ENCODE measurements at regions of chr11 and their contacts with region 1.

Region 1: DNA sequence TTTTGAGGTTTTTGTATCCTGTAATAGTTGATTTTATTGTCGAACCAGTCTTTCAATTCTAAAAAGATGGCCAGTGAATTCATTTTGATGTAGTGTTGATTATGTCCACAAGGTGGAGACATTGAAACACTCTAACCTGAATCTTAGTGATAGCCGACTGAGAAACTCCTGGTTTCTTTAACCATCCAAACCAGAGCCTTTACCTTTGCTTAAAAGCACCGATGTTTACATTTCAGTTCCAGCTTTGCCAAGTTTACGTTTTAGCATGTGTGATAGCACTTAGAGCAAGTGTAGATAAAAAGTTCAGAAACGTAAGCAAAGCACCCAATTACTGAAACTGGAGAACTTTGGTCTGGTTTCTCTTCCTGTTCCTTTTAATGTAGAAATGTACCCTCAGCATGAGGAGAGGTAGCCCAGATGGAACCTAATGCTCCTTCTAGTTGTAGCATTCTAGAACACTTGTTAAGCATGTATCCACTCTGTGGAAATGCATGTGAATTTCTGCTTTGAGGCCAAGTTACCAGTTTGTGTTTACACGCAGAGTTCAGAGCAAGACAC is 208.6 kb downstream of the DBX1 start:
- DNase-seq: no peak
- ATAC-seq: peak; percentile 51 to 65
- H3K4me3 ChIP-seq: no peak overlapping the region
- H3K27ac ChIP-seq: no peak overlapping the region
- H3K4me1 ChIP-seq: peaks cover 12 to 28% of the 10 kb centered on the region in 2 donors
- H3K27me3 ChIP-seq: no peaks in the 10 kb centered on the region
- CTCF ChIP-seq: peak; percentile 51 to 74 (median 65)
- POLR2A ChIP-seq: no peak

Region 2: GRCh38 chr11:20000351-20001134 is 48.9 kb after region 1 on chr11:
- in situ Hi-C with region 1: no loop called
- intact Hi-C with region 1: no loop called
- DNase-seq: no peak
- ATAC-seq: no peak
- H3K4me3 ChIP-seq: no peak overlapping the region
- H3K27ac ChIP-seq: no peak overlapping the region
- H3K4me1 ChIP-seq: peaks cover 0 to 10% of the 10 kb centered on the region in 2 donors
- H3K27me3 ChIP-seq: no peaks in the 10 kb centered on the region
- CTCF ChIP-seq: no peak
- POLR2A ChIP-seq: no peak

Region 3: DNA sequence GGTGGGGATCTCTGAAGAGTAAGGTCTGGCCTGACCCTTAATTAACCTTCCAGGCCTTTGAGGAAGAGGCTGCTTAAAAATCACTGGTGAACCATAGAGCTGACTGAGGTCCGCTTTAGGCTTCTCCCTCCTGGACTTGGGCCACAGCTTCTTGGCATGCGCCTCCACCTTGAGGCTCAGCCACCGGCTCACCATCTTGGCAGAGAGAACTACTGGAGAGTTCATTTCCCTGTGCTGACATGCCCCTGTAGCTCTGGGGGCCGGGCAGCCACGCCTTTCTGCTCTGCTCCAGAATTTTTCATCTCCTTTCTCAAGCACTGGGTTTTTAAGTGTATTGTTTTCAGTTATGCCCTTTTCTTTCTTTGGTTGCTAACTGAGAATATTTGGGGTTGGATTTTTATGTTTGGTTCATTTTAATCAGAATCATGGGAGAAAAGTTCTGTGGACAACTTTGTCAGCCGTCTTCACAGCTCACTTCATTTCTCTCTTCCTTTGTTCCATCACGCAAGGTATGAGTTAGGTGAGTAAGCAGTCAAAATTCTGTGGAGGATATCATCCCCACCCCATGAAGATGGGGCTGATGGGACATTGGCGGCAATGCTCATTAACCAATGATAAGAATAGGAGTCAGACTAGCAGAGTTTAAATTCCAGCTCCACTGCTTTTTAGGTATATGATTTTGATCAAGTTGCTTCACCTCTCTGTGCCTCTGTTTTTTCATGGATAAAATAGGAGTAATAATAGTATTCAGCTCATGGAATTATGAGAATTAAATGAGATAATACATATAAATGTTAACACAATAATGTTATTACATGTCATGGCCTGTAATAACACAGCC is 104.7 kb after region 1 on chr11:
- in situ Hi-C with region 1: no loop called
- intact Hi-C with region 1: loop called (anchors 5 kb)
- DNase-seq: peak; percentile 58
- ATAC-seq: peak; percentile 54 to 74
- H3K4me3 ChIP-seq: no peak overlapping the region
- H3K27ac ChIP-seq: peak overlapping the region; percentile 67 to 87 (median 79)
- H3K4me1 ChIP-seq: peaks cover 34 to 45% of the 10 kb centered on the region in 2 donors
- H3K27me3 ChIP-seq: no peaks in the 10 kb centered on the region
- CTCF ChIP-seq: no peak
- POLR2A ChIP-seq: no peak

Region 4: GRCh38 chr11:20102397-20102796 is 150.8 kb after region 1 on chr11:
- in situ Hi-C with region 1: loop called in 1 of 4 experiments (anchors 10 kb)
- intact Hi-C with region 1: no loop called
- DNase-seq: no peak
- ATAC-seq: no peak
- H3K4me3 ChIP-seq: no peak overlapping the region
- H3K27ac ChIP-seq: no peak overlapping the region
- H3K4me1 ChIP-seq: no peaks in the 10 kb centered on the region
- H3K27me3 ChIP-seq: no peaks in the 10 kb centered on the region
- CTCF ChIP-seq: no peak
- POLR2A ChIP-seq: no peak

Region 5: DNA sequence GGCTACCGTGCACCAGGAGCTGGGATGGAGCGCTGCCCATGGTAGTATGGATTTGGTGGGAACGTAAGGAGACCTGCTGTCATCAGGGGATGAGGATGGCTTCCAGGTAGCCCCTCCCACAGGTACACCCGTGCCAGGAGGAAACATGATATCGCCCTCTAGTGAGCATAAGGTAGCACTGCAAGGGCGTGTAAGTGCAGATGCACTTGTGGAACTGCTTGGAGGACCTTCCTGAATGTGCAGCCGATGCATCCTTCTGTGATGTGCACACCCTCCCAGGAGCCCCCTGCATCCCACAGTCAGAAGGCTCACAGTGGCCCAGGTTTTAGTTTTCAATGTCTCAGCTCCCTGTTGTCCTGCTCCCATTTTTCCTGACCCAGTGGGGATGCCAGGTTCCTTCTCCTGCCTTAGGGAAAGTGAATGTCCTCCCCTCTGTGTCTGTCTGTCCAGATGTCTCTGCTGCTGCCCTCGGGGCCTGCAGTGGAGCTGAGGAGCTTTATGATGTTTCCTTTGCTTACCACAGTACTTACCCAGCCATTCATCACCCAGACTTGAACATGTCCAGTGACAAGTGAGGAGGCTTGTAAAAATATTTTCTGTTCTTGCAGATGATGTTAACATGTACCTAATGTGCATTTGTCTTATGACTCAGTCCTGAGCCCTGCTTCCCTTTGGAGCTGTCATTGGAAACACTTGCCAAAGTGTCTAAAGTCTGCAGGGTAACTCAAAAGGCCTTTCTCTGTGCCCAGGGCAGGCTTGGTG is 159.5 kb after region 1 on chr11:
- in situ Hi-C with region 1: loop called in 2 of 4 experiments (anchors 5 to 10 kb)
- intact Hi-C with region 1: loop called (anchors 2 kb)
- DNase-seq: no peak
- ATAC-seq: peak in 1 of 2 donors; percentile 42
- H3K4me3 ChIP-seq: no peak overlapping the region
- H3K27ac ChIP-seq: peak overlapping the region in 1 of 4 donors; percentile 67
- H3K4me1 ChIP-seq: peaks cover 8 to 9% of the 10 kb centered on the region in 2 donors
- H3K27me3 ChIP-seq: no peaks in the 10 kb centered on the region
- CTCF ChIP-seq: peak; percentile 49 to 79 (median 75)
- POLR2A ChIP-seq: no peak

Region 6: DNA sequence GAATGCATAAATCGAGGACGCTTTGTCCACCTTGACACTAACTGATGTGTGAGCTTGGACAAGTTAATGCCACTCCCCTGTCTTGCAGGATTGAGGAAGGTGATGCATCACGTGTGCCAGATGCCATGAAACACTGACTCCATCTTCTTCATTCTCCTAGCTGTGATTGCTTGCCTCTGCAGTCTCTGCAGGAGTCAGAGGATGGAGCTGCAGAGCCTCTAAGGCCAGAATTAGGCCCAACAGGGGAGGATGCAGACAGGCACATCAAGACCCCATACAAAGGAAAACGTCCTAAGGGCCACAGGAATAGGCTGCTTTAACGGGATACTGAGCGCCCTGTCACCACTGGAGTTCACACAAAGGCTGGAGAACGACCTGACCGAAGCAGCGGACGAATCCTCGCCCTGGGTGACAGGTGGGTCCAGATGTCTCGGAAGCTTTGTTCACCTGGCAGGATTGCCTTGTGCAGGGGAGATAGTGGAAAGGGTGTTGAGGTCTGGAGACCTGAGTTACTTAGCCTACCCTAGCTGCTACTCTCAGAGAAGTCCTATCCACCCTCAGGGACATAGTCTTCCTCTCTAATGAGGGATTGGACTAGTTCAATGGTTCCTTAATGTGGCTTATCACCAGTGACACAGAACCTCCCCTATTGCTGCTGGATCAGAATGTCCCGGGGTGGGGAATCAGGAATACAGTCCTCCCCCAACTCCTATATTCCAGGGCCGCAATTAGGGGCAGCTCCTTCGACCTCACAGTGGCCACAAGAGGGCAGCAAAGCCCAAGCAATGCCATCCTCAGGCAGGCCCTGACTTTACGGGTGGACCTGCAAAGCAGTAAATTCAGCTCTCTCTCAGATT is 176.3 kb after region 1 on chr11:
- in situ Hi-C with region 1: loop called in 1 of 4 experiments (anchors 10 kb)
- intact Hi-C with region 1: no loop called
- DNase-seq: peak; percentile 17 to 45
- ATAC-seq: peak; percentile 75 to 87
- H3K4me3 ChIP-seq: no peak overlapping the region
- H3K27ac ChIP-seq: no peak overlapping the region
- H3K4me1 ChIP-seq: no peaks in the 10 kb centered on the region
- H3K27me3 ChIP-seq: no peaks in the 10 kb centered on the region
- CTCF ChIP-seq: peak; percentile 57 to 83 (median 83)
- POLR2A ChIP-seq: no peak

Region 7: GRCh38 chr11:20193307-20193706 is 241.7 kb after region 1 on chr11:
- in situ Hi-C with region 1: no loop called
- intact Hi-C with region 1: no loop called
- DNase-seq: no peak
- ATAC-seq: no peak
- H3K4me3 ChIP-seq: no peak overlapping the region
- H3K27ac ChIP-seq: no peak overlapping the region
- H3K4me1 ChIP-seq: no peaks in the 10 kb centered on the region
- H3K27me3 ChIP-seq: no peaks in the 10 kb centered on the region
- CTCF ChIP-seq: no peak
- POLR2A ChIP-seq: no peak

Region 8: GRCh38 chr11:20337526-20338154 is 386.0 kb after region 1 on chr11:
- in situ Hi-C with region 1: loop called in 2 of 4 experiments (anchors 25 kb)
- intact Hi-C with region 1: no loop called
- DNase-seq: no peak
- ATAC-seq: no peak
- H3K4me3 ChIP-seq: no peak overlapping the region
- H3K27ac ChIP-seq: no peak overlapping the region
- H3K4me1 ChIP-seq: no peaks in the 10 kb centered on the region
- H3K27me3 ChIP-seq: peaks cover 4 to 12% (median 7%) of the 10 kb centered on the region in 3 donors
- CTCF ChIP-seq: no peak
- POLR2A ChIP-seq: no peak

Region 9: DNA sequence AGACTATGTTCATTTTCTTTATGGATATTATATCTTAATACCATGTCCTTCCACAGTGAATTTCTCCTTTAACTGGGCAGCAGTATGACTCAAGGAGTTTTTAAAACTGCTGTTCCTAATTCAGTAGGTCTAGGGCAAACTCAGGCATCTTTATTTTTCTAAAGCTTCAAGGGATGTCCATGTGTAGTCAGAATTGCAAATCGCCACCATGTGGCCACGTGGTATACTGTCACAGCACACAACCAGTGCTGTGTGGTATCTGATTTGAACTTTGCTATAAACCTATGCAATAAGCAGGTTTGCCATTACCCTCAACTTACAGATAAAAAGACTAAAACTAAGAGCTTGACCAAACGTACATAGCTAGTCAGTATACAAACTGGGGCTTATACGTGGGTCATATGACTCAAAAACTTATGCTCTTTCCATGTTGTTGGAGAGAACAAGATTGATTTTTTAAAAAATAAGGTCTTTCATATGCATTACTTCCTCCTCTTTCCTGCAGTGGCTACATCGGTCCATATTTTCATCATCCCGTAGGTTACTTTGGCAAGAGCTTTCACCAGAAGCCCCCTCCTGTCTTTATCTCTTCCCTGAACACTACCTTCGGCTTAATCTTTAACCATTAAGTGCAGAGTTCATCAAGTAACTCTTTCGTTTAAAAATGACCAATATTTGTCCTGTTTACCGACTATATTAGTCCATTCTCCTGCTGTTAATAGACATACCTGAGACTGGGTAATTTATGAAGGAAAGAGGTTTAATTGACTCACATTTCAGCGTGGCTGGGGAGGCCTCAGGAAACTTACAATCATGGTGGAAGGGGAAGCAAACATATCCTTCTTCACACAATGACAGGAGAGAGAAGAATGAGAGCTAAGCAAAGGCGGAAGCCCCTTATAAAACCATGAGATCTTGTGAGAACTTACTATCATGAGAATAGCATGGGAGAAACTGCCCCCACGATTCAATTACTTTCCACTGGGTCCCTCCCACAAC is 403.9 kb after region 1 on chr11:
- in situ Hi-C with region 1: loop called in 2 of 4 experiments (anchors 10 to 25 kb)
- intact Hi-C with region 1: loop called (anchors 2 kb)
- DNase-seq: no peak
- ATAC-seq: no peak
- H3K4me3 ChIP-seq: no peak overlapping the region
- H3K27ac ChIP-seq: no peak overlapping the region
- H3K4me1 ChIP-seq: no peaks in the 10 kb centered on the region
- H3K27me3 ChIP-seq: no peaks in the 10 kb centered on the region
- CTCF ChIP-seq: peak in 3 of 5 experiments; percentile 21 to 45 (median 24)
- POLR2A ChIP-seq: no peak